ENCODE measurements at regions of chr10 and their contacts with region 1.

Region 1: DNA sequence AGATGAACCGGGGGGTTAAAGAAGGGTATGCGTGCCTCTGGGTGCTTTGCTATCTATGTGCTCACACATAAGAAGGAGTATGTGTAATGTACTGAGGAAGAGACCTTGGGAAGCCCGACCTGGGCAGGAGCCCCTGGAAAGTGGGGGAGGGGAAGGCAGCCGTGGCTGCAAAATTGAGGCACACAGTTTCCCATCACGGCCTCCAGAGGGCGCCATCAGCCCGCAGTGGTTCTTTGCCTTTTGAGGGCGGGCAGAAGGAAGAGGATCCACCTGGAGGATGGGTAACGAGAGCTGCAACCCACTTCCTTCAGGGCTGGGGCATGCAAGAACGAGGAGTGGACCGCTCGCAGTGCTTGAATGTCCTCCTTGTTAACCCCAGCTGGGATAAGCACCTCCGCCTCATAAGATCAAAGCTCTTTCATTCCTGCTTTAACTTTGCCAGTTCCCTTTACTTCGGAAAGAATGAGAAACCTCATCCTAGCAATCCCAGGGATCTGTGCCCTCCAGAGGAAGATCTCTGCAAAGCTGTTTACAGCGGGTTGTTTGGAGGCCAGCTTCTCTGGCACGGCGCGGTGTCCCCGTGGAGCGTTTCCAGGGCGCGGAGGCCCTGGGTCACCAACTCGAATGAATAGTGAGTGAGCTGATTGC is 77.9 kb downstream of the PCGF5 start:
- DNase-seq: peak; percentile 69
- H3K4me3 ChIP-seq: peak overlapping the region in 2 of 3 experiments; percentile 18 to 47
- H3K27ac ChIP-seq: no peak overlapping the region
- H3K4me1 ChIP-seq: peaks cover 5% of the 10 kb centered on the region
- H3K27me3 ChIP-seq: no peaks in the 10 kb centered on the region
- CTCF ChIP-seq: peak; percentile 83 to 99

Region 2: DNA sequence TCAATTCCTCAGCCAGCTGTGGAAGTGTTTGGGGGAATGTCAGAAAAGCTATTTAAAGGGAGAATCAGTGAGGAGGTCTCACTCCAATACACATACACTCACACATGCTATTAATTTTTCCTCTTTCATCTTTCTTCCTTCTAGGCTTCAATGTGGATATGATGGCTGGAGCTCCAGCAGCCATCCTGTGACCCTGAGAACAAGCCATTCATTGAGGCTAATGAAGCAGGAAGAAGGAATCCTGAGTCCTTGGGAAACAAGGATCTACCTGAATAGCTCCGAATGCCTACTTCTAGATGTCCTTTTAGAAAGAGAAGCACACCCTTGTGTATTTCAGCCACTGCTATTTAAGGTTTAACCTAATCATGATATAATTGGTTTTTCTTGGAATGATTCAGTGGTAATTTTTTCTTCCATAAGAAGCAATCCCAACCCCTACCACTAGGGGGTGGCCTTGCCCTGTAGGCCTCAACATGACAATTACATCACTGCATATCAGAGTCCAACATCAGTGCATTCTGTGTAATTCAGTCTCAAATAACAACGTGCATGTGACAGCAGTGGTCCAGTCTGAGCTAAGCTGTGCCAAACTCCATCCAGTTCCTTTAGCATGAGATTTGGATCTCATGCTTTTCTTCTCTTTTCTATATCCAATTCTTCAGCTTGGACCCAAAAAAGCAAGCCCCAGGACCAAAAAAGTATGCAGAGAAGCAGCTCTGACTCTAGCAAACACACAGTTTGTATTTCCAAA is 292.2 kb before region 1 on chr10:
- CTCF ChIA-PET with region 1: no interaction called
- dilution Hi-C with region 1: no loop called
- in situ Hi-C with region 1: no loop called
- intact Hi-C with region 1: loop called (anchors 1 kb)
- DNase-seq: peak; percentile 50
- H3K4me3 ChIP-seq: no peak overlapping the region
- H3K27ac ChIP-seq: no peak overlapping the region
- H3K4me1 ChIP-seq: no peaks in the 10 kb centered on the region
- H3K27me3 ChIP-seq: no peaks in the 10 kb centered on the region
- CTCF ChIP-seq: peak; percentile 97 to 99

Region 3: DNA sequence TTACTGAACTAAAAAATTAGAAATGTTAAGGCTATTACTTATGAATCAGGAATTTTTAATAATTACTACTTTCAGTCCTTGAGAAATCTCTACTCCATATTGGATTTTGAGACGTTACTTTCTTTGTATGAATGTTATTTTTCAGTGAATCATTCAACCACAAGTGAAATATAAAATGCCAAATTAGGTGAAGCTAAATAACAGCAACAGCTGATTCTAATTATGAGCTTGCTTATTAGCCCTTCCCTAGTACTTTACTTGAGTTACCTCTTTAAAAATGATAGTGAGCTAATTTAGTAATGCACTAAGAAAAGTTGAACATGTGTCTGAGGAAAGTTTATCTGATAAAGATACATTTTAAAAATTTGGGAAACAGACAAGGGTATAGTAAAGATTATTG is 26.5 kb before region 1 on chr10:
- CTCF ChIA-PET with region 1: no interaction called
- dilution Hi-C with region 1: no loop called
- in situ Hi-C with region 1: no loop called
- intact Hi-C with region 1: no loop called
- DNase-seq: no peak
- H3K4me3 ChIP-seq: no peak overlapping the region
- H3K27ac ChIP-seq: no peak overlapping the region
- H3K4me1 ChIP-seq: peaks cover 1% of the 10 kb centered on the region
- H3K27me3 ChIP-seq: no peaks in the 10 kb centered on the region
- CTCF ChIP-seq: no peak

Region 4: DNA sequence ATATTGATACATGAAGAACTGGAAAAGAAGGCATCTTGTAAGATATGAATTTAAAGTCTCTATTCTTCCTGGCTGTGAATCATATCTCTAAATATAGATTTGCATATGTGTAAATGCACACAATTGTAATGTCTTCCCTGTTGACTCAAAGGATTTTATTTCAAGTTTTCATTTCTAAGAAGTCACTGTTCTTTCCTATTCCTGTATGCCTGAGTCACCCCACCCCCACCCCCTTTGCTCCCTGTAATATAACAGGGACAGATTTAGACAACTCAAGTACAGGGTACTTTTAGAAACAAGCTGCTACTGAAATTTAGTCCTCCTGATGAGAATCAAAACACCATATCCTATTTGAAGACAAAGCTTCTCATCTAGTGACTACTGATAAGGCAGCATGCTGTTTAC is 68.8 kb after region 1 on chr10:
- CTCF ChIA-PET with region 1: interaction called, 13 read pairs
- dilution Hi-C with region 1: no loop called
- in situ Hi-C with region 1: loop called (anchors 5 to 10 kb)
- intact Hi-C with region 1: loop called (anchors 1 kb)
- DNase-seq: no peak
- H3K4me3 ChIP-seq: no peak overlapping the region
- H3K27ac ChIP-seq: no peak overlapping the region
- H3K4me1 ChIP-seq: no peaks in the 10 kb centered on the region
- H3K27me3 ChIP-seq: no peaks in the 10 kb centered on the region
- CTCF ChIP-seq: no peak

Region 5: GRCh38 chr10:91409869-91410637 is 111.7 kb after region 1 on chr10 and contains the start of gene HECTD2:
- CTCF ChIA-PET with region 1: no interaction called
- dilution Hi-C with region 1: no loop called
- in situ Hi-C with region 1: no loop called
- intact Hi-C with region 1: loop called (anchors 1 kb)
- DNase-seq: peak; percentile 74
- H3K4me3 ChIP-seq: peak within 1 kb of the TSS; percentile 53 to 81 (median 76)
- H3K27ac ChIP-seq: peak within 1 kb of the TSS; percentile 84
- H3K4me1 ChIP-seq: peaks cover 21% of the 10 kb centered on the region
- H3K27me3 ChIP-seq: no peaks in the 10 kb centered on the region
- CTCF ChIP-seq: peak in 1 of 2 donors; percentile 21
- total RNA-seq, gene HECTD2: 10.0 TPM

Region 6: DNA sequence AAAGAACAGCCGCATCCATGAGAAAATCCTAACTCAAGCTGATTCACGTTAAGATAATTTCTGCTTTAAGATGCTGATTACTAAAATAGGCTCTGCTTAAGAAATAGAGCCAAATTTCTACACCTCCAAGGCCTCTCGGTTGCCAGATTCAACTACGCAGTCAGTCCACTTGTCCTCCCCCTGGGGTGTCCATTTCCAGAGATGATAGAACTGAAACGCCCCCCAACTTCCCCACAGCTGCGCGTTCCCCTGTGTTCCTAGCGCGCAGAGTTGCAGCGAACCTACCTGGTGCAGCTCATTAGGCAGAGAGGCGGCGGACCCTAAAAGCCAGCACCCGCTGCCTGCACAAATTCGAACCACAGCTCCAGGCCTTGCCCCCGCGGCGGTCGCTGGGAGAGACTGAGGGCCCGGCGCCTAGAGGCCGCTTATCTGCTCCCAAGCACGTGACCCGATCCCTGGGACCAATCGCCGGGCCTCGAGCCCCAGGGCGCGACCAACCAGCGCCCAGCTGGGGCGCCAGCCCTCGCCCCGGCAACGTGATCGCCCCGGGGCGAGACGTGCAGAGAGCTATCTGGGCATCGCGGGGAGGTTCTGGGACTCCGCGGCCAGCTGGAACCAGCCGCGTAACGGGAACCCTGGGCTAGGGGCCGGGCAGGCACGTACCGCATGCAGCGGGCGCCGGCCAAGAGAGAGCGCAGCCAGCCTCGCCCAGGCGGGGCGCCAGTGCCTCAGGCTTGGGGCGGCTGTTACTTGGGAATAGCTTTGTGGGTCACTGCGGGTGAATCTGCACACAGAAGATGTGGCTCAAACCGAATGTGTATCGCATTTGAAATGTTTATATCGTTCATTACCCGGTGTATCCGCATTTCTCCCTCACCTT is 334.6 kb after region 1 on chr10 and contains the start of gene PPP1R3C:
- CTCF ChIA-PET with region 1: no interaction called
- dilution Hi-C with region 1: no loop called
- in situ Hi-C with region 1: loop called in 1 of 2 experiments (anchors 10 kb)
- intact Hi-C with region 1: loop called (anchors 1 kb)
- DNase-seq: peak; percentile 84
- H3K4me3 ChIP-seq: peak within 1 kb of the TSS; percentile 53 to 71 (median 55)
- H3K27ac ChIP-seq: peak within 1 kb of the TSS; percentile 15
- H3K4me1 ChIP-seq: peaks cover 19% of the 10 kb centered on the region
- H3K27me3 ChIP-seq: no peaks in the 10 kb centered on the region
- CTCF ChIP-seq: peak in 1 of 2 donors; percentile 36
- total RNA-seq, gene PPP1R3C: 0.49 to 11.3 TPM

Region 7: GRCh38 chr10:91880312-91880711 is 582.0 kb after region 1 on chr10:
- CTCF ChIA-PET with region 1: no interaction called
- dilution Hi-C with region 1: no loop called
- in situ Hi-C with region 1: no loop called
- intact Hi-C with region 1: no loop called
- DNase-seq: peak; percentile 81
- H3K4me3 ChIP-seq: no peak overlapping the region
- H3K27ac ChIP-seq: no peak overlapping the region
- H3K4me1 ChIP-seq: peaks cover 17% of the 10 kb centered on the region
- H3K27me3 ChIP-seq: no peaks in the 10 kb centered on the region
- CTCF ChIP-seq: peak in 1 of 2 donors; percentile 40

Measured in mammary epithelial cell (primary cell).